Ovary (tissue), 10 donors: ENCODE measurements at regions of chr12 and their contacts with region 1.

Region 1: GRCh38 chr12:116277393-116278278 is at the start of gene MED13L:
- DNase-seq: peak; percentile 88 to 94 (median 93)
- H3K4me3 ChIP-seq: peak within 1 kb of the TSS; percentile 78
- H3K27ac ChIP-seq: peak within 1 kb of the TSS; percentile 82 to 96
- H3K4me1 ChIP-seq: peaks cover 2% of the 10 kb centered on the region
- H3K27me3 ChIP-seq: no peaks in the 10 kb centered on the region
- CTCF ChIP-seq: peak in 2 of 3 donors; percentile 42 to 54
- EP300 ChIP-seq: no peak
- POLR2A ChIP-seq: peak; percentile 38
- total RNA-seq, gene MED13L: 127 to 198 (median 168) TPM

Region 2: GRCh38 chr12:116015525-116015924 is 262.1 kb before region 1 on chr12:
- intact Hi-C with region 1: loop called in 2 of 4 experiments (anchors 10 kb)
- DNase-seq: no peak
- H3K4me3 ChIP-seq: no peak overlapping the region
- H3K27ac ChIP-seq: no peak overlapping the region
- H3K4me1 ChIP-seq: peaks cover 2% of the 10 kb centered on the region
- H3K27me3 ChIP-seq: no peaks in the 10 kb centered on the region
- CTCF ChIP-seq: peak; percentile 12 to 54 (median 34)
- EP300 ChIP-seq: no peak
- POLR2A ChIP-seq: no peak

Region 3: DNA sequence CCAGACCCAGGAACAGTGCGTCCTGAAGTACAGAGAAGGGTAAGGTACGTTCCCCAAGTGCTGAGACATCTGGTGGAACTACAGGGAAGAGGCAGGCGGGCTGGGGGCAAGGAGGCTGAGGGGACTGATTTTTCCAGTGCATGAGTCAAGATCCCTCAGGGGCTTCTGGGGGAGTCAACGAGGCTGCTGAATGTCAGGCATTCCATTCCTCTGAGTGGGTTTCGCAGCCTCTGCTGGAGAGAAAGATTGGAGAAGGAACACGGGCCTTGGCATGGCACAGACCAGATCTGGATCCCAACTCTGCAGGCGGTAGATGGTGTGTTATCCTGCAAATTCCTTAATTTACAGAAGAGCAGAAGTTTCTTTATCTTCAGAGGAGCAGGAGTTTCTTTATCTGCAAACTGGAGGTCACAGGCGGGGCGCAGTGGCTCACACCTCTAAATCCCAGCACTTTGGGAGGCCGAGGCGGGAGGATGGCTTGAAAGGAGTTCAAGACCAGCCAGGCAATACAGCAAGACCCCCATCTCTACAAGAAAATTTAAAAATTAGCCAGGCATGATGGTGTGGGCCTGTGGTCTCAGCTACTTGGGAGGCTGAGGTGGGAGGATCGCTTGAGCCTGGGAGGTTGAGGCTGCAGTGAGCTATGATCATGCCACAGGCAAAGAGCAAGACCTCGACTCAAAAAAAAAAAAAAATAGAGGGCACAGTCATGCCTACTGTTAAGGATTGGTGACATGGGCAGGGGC is 148.9 kb after region 1 on chr12:
- intact Hi-C with region 1: loop called in 2 of 4 experiments (anchors 5 to 10 kb)
- DNase-seq: peak; percentile 67 to 85 (median 83)
- H3K4me3 ChIP-seq: no peak overlapping the region
- H3K27ac ChIP-seq: no peak overlapping the region
- H3K4me1 ChIP-seq: peaks cover 4% of the 10 kb centered on the region
- H3K27me3 ChIP-seq: no peaks in the 10 kb centered on the region
- CTCF ChIP-seq: peak in 2 of 3 donors; percentile 28 to 31
- EP300 ChIP-seq: no peak
- POLR2A ChIP-seq: no peak